ENCODE measurements at regions of chr1 and their contacts with region 1.

Region 1: GRCh38 chr1:192808518-192809306 is at the start of gene RGS2:
- DNase-seq: peak; percentile 87
- H3K4me3 ChIP-seq: peak within 1 kb of the TSS; percentile 82 to 98 (median 95)
- H3K27ac ChIP-seq: peak within 1 kb of the TSS; percentile 70
- H3K4me1 ChIP-seq: peaks cover 27% of the 10 kb centered on the region
- H3K27me3 ChIP-seq: no peaks in the 10 kb centered on the region
- CTCF ChIP-seq: peak in 1 of 2 donors; percentile 27
- total RNA-seq, gene RGS2: 20.0 to 28.5 TPM

Region 2: GRCh38 chr1:192477630-192478029 is 331.1 kb before region 1 on chr1:
- CTCF ChIA-PET with region 1: no interaction called
- dilution Hi-C with region 1: no loop called
- in situ Hi-C with region 1: no loop called
- intact Hi-C with region 1: loop called (anchors 5 kb)
- DNase-seq: peak; percentile 6
- H3K4me3 ChIP-seq: no peak overlapping the region
- H3K27ac ChIP-seq: no peak overlapping the region
- H3K4me1 ChIP-seq: no peaks in the 10 kb centered on the region
- H3K27me3 ChIP-seq: peaks cover 3% of the 10 kb centered on the region
- CTCF ChIP-seq: peak; percentile 29 to 49

Region 3: GRCh38 chr1:192904438-192904895 is 95.8 kb after region 1 on chr1:
- CTCF ChIA-PET with region 1: no interaction called
- dilution Hi-C with region 1: loop called (anchors 5 kb)
- in situ Hi-C with region 1: no loop called
- intact Hi-C with region 1: loop called (anchors 2 kb)
- DNase-seq: peak; percentile 88
- H3K4me3 ChIP-seq: peak overlapping the region in 1 of 3 experiments; percentile 13
- H3K27ac ChIP-seq: peak overlapping the region; percentile 96
- H3K4me1 ChIP-seq: peaks cover 49% of the 10 kb centered on the region
- H3K27me3 ChIP-seq: no peaks in the 10 kb centered on the region
- CTCF ChIP-seq: no peak

Region 4: GRCh38 chr1:192998536-192998935 is 189.8 kb after region 1 on chr1:
- CTCF ChIA-PET with region 1: no interaction called
- dilution Hi-C with region 1: loop called (anchors 25 kb)
- in situ Hi-C with region 1: no loop called
- intact Hi-C with region 1: loop called (anchors 1 kb)
- DNase-seq: no peak
- H3K4me3 ChIP-seq: no peak overlapping the region
- H3K27ac ChIP-seq: no peak overlapping the region
- H3K4me1 ChIP-seq: no peaks in the 10 kb centered on the region
- H3K27me3 ChIP-seq: no peaks in the 10 kb centered on the region
- CTCF ChIP-seq: peak; percentile 49 to 55

Region 5: GRCh38 chr1:193121616-193122593 is 313.2 kb after region 1 on chr1 and contains the start of gene CDC73:
- CTCF ChIA-PET with region 1: no interaction called
- dilution Hi-C with region 1: no loop called
- in situ Hi-C with region 1: no loop called
- intact Hi-C with region 1: loop called (anchors 2 kb)
- DNase-seq: peak; percentile 97
- H3K4me3 ChIP-seq: peak within 1 kb of the TSS; percentile 90 to 97 (median 93)
- H3K27ac ChIP-seq: peak within 1 kb of the TSS; percentile 86
- H3K4me1 ChIP-seq: peaks cover 3% of the 10 kb centered on the region
- H3K27me3 ChIP-seq: no peaks in the 10 kb centered on the region
- CTCF ChIP-seq: peak; percentile 78 to 95
- total RNA-seq, gene CDC73: 27.5 to 58.3 TPM

Measured in mammary epithelial cell (primary cell).